ENCODE measurements at regions of chr9 and their contacts with region 1.

Region 1: GRCh38 chr9:131739980-131740648 is at the start of gene RAPGEF1:
- DNase-seq: peak; percentile 76
- H3K4me3 ChIP-seq: peak within 1 kb of the TSS; percentile 72
- H3K27ac ChIP-seq: peak within 1 kb of the TSS; percentile 94
- H3K4me1 ChIP-seq: peaks cover 61% of the 10 kb centered on the region
- H3K27me3 ChIP-seq: no peaks in the 10 kb centered on the region
- CTCF ChIP-seq: peak; percentile 88
- total RNA-seq, gene RAPGEF1: 95.9 TPM

Region 2: DNA sequence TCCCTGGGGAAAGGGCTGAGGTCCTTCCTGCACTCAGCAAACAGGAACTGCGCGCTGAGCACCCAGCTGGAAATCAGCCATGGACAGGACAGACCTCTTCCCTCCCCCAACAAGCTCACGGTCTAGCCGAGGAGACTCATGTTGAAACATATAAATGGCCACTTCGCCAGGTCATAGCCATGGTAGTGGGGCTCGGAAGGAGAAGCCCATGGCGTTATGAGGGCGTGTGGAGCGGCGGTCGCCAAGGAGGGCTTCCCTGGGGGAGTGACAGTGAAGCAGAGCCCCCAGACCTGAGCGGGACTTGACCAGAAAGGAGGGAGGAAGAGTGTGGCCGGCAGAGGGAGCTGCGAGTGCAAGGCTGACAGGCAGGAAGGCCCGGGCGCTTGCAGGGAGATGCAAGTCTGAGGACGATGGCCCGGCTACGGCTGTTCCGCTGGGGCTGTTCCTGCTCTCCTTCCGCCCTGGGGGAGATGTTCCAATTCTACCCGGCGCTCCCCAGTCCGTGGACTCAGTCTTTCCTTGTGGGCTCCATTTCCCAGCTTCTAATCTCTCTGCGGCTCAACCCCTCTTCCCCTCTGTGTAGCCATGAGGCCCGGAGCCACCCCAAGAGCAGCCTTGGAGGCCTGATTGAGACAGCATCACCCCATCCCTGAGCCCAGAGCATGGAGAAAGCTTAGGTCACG is 390.1 kb before region 1 on chr9:
- intact Hi-C with region 1: loop called (anchors 10 kb)
- DNase-seq: peak; percentile 91
- H3K4me3 ChIP-seq: peak overlapping the region; percentile 50
- H3K27ac ChIP-seq: no peak overlapping the region
- H3K4me1 ChIP-seq: peaks cover 12% of the 10 kb centered on the region
- H3K27me3 ChIP-seq: no peaks in the 10 kb centered on the region
- CTCF ChIP-seq: peak; percentile 94

Region 3: DNA sequence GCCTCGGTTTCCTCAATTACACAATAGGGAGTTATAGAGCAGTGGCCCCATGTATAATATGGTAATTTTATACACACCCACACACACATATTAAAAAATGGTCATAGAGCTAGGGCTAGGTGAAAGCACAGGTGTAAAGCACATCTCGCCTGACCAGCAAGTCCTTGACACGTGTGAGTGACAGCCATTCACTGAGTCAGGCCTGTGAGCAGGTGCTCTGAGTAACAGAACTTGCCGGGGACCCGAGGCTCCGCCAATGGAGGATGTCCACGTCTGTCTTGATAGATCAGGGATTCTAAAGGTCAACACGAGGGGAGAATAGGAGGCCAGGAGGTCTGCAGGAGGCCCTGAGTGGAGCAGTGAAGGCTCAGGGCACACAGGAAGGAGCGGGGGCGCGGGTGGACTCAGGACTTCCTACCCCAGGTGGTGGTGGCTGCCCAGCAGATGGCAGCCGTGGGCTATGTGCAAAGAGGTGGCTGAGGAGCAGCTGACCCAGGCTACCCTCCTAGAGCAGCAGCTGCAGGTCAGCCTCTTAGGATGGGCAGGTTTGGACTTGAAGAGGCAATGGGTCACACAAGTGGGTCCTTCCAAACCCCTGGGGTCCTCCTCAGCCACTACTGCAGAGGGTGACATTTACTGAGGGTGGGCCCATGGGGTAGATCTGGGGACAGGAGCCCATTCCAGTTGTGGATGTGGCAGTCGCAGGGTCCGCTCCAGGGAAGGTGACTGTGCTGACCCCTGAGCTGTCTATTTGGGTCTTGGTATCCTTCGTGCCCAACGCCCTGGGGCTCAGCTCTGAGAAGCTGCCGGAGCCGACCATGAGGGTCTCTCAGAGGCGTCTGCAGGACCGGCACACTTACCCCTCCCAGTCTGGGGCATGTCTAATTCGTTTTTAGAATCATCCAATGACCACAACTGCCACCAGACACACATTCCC is 148.9 kb before region 1 on chr9:
- intact Hi-C with region 1: loop called (anchors 5 kb)
- DNase-seq: peak; percentile 83
- H3K4me3 ChIP-seq: no peak overlapping the region
- H3K27ac ChIP-seq: peak overlapping the region; percentile 16
- H3K4me1 ChIP-seq: peaks cover 24% of the 10 kb centered on the region
- H3K27me3 ChIP-seq: no peaks in the 10 kb centered on the region
- CTCF ChIP-seq: peak; percentile 88

Region 4: DNA sequence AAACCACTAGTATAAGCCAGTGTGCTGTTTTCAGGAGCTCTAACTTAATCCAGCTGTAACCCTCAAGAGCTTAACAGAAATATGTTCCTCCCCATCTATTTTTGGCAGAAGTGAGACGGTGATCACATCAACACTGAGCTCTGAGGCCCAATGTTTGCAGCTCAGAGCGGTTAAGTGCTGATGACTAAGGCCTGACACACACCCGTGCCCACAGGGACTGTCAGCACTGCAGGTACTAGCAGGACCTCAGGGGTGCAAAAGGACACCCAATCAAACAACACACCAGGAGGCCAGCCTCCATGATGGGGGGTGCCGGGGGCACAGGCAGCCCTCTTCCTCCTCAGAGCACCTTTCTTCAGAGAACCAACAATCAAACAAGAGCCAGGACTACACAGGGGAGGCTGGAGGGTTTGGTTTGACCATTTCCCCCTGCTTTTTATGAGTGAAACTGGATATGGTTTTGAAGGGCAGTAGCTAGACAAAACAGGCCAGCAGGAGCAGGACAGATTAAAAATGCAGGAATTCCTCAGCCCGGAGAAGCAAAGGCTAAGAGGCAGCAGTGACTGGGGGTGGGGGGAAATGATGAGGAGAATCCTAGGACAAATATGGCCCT is 61.5 kb before region 1 on chr9:
- intact Hi-C with region 1: loop called (anchors 10 kb)
- DNase-seq: peak; percentile 69
- H3K4me3 ChIP-seq: no peak overlapping the region
- H3K27ac ChIP-seq: peak overlapping the region; percentile 86
- H3K4me1 ChIP-seq: peaks cover 100% of the 10 kb centered on the region
- H3K27me3 ChIP-seq: no peaks in the 10 kb centered on the region
- CTCF ChIP-seq: no peak

Region 5: GRCh38 chr9:132240753-132241493 is 500.8 kb after region 1 on chr9:
- intact Hi-C with region 1: no loop called
- DNase-seq: peak; percentile 98
- H3K4me3 ChIP-seq: peak overlapping the region; percentile 75
- H3K27ac ChIP-seq: peak overlapping the region; percentile 44
- H3K4me1 ChIP-seq: peaks cover 50% of the 10 kb centered on the region
- H3K27me3 ChIP-seq: peaks cover 16% of the 10 kb centered on the region
- CTCF ChIP-seq: no peak

Measured in left ventricle myocardium inferior (tissue), 1 donor.